Aorta (tissue), 5 donors: ENCODE measurements at regions of chr10 and their contacts with region 1.

Region 1: GRCh38 chr10:109894516-109894915 is 28.8 kb downstream of the XPNPEP1 start:
- DNase-seq: peak; percentile 83
- ATAC-seq: peak; percentile 81
- H3K4me3 ChIP-seq: no peak overlapping the region
- H3K27ac ChIP-seq: peak overlapping the region; percentile 68 to 86
- H3K4me1 ChIP-seq: peaks cover 7 to 19% of the 10 kb centered on the region in 2 donors
- H3K27me3 ChIP-seq: no peaks in the 10 kb centered on the region

Region 2: DNA sequence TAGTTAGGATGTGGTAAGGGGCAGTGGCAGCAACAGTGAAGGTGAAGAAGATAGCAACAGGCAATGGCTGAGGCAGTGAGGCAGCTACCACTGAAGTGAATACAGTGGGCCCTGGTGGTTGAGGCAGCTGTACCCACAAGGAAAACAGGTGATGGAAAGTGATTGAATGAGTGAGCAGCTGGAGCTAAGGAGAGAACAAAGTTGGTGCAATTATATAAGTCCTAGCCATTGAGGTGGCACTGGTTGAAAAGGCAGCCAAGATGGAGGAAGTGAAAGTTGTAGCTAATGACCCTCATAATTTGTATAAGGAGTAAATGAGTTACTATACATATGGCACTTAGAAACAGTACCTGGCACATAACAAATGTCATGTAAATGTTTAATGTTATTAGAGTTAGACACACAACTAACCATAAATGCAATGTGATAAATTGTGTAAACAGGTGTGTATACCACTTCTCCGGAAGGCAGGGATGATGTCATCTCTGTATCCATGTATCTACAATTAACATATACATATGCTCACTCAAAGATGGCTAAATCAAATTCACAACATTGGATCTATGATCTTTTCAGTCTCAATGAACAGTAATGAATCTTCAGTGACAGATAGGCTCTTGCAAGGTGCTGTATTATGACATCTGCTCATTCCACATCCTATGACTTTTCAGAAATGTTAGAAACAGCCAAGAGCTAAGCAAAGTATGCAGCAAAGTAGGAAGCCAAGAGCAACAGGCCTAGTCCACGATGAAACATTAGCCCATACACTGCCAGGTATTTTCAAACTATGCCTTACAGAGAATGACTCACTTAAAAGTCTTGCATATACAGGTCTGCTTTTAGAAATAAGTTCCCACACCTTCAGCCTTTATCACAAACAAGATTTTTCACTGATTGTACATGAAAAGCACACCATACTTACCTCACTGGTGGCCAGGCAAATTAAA is 18.1 kb after region 1 on chr10:
- intact Hi-C with region 1: loop called in 1 of 2 experiments (anchors 2 kb)
- DNase-seq: no peak
- ATAC-seq: peak; percentile 52
- H3K4me3 ChIP-seq: no peak overlapping the region
- H3K27ac ChIP-seq: peak overlapping the region in 1 of 2 donors; percentile 95
- H3K4me1 ChIP-seq: peaks cover 2 to 4% of the 10 kb centered on the region in 2 donors
- H3K27me3 ChIP-seq: no peaks in the 10 kb centered on the region

Region 3: GRCh38 chr10:109934958-109935706 is 40.6 kb after region 1 on chr10:
- intact Hi-C with region 1: loop called in 1 of 2 experiments (anchors 5 kb)
- DNase-seq: no peak
- ATAC-seq: peak; percentile 56
- H3K4me3 ChIP-seq: no peak overlapping the region
- H3K27ac ChIP-seq: peak overlapping the region in 1 of 2 donors; percentile 37
- H3K4me1 ChIP-seq: no peaks in the 10 kb centered on the region
- H3K27me3 ChIP-seq: no peaks in the 10 kb centered on the region

Region 4: GRCh38 chr10:109966961-109967738 is 72.6 kb after region 1 on chr10:
- intact Hi-C with region 1: loop called (anchors 2 to 5 kb)
- DNase-seq: no peak
- ATAC-seq: no peak
- H3K4me3 ChIP-seq: no peak overlapping the region
- H3K27ac ChIP-seq: peak overlapping the region in 1 of 2 donors; percentile 51
- H3K4me1 ChIP-seq: peaks cover 17 to 18% of the 10 kb centered on the region in 2 donors
- H3K27me3 ChIP-seq: no peaks in the 10 kb centered on the region

Region 5: DNA sequence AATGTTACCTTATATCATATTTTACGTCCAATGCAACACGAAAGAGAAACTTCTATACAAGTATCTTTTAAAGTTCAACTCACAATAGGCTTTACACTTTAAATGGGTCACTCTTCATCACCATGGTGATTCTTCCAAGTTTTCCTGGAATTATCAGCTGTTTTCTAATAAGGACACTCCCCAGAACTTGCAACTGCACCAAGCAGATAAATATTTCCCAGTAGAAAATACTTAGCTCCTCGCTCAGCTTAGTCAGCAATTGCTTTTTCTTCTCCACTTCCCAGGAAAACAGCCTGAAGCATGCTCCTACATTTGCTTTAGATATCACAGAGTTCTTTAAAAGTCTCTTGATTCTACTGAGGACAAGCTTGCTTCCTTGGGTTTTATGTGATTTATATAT is 87.6 kb after region 1 on chr10:
- intact Hi-C with region 1: loop called in 1 of 2 experiments (anchors 5 kb)
- DNase-seq: no peak
- ATAC-seq: peak; percentile 77
- H3K4me3 ChIP-seq: no peak overlapping the region
- H3K27ac ChIP-seq: no peak overlapping the region
- H3K4me1 ChIP-seq: peaks cover 5% of the 10 kb centered on the region in 2 donors
- H3K27me3 ChIP-seq: no peaks in the 10 kb centered on the region

Region 6: DNA sequence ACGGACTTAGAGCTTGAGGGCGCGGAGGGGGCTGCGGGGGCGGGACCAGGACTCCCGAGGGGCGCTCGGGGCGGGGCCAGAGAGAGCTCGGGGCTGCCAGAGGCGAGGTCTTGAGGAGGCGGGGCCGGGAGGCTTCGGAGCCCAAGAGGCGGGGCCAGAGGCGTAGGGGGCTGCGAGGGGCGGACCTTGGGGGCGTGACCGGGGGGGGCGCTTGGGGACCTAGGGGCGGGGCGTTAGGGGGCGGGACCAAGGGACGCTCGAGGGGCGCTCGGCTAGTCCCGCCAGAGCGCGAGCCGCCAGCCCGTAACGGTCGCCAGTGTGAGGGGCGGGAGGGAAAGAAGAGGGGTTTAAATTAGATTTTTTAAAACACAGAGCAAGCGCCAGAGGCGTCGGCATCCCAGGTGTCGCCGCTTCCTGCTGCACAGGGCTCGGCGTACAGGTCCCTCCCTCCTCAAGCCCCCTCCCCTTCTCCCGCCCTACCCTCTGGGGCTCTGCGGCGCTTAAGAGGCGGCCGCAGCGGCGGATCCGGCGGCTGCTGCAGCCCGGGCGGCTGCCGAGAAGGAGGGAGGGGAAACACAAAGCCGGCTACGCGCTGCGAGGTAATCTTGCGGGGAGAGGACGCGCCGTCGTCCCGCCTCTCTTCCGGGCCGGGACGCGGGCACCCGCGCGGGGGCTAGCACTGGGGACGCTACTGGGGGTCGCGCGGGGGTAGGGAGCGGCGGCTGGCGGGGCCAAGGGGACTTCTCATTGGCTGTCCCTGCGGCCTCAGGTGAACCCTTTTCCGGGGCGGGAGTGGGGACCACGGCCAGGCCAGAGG is 113.4 kb after region 1 on chr10 and contains the start of gene ADD3:
- intact Hi-C with region 1: loop called (anchors 5 kb)
- DNase-seq: peak; percentile 96 to 98
- ATAC-seq: peak; percentile 96
- H3K4me3 ChIP-seq: peak within 1 kb of the TSS; percentile 76 to 88
- H3K27ac ChIP-seq: peak within 1 kb of the TSS; percentile 50 to 96
- H3K4me1 ChIP-seq: peaks cover 0 to 6% of the 10 kb centered on the region in 2 donors
- H3K27me3 ChIP-seq: no peaks in the 10 kb centered on the region
- total RNA-seq, gene ADD3: 80.9 to 197 TPM

Region 7: GRCh38 chr10:110029450-110029849 is 134.9 kb after region 1 on chr10:
- intact Hi-C with region 1: no loop called
- DNase-seq: no peak
- ATAC-seq: no peak
- H3K4me3 ChIP-seq: no peak overlapping the region
- H3K27ac ChIP-seq: no peak overlapping the region
- H3K4me1 ChIP-seq: peaks cover 0 to 2% of the 10 kb centered on the region in 2 donors
- H3K27me3 ChIP-seq: no peaks in the 10 kb centered on the region

Region 8: GRCh38 chr10:110285501-110285900 is 391.0 kb after region 1 on chr10:
- intact Hi-C with region 1: loop called (anchors 5 to 10 kb)
- DNase-seq: no peak
- ATAC-seq: no peak
- H3K4me3 ChIP-seq: no peak overlapping the region
- H3K27ac ChIP-seq: no peak overlapping the region
- H3K4me1 ChIP-seq: peaks cover 2 to 4% of the 10 kb centered on the region in 2 donors
- H3K27me3 ChIP-seq: no peaks in the 10 kb centered on the region